ENCODE measurements at regions of chr22 and their contacts with region 1.

Region 1: GRCh38 chr22:40645579-40646197 is 9.2 kb upstream of the MRTFA start:
- DNase-seq: no peak
- H3K4me3 ChIP-seq: no peak overlapping the region
- CTCF ChIP-seq: no peak
- POLR2A ChIP-seq: no peak

Region 2: DNA sequence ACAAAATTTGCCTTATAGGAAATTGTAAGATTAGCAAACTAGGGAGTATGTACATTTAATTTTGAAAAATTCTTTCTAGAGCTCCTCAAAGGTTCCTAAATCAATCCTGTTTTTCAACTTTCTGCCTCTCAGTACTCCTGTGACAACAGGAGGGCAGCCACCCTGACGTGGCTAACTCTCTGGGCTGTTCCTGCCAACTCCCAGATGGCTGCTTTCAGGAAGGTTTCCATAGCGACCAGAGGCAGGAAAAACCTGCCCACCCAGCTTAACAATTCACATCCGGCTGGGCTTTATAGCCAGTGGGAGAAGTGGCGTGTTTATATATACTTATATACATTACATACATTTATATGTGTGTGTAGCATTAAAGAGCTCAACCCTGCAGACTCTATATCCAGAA is 248.8 kb before region 1 on chr22:
- intact Hi-C with region 1: no loop called
- DNase-seq: peak in 1 of 2 donors; percentile 70
- H3K4me3 ChIP-seq: no peak overlapping the region
- CTCF ChIP-seq: no peak
- POLR2A ChIP-seq: no peak

Region 3: DNA sequence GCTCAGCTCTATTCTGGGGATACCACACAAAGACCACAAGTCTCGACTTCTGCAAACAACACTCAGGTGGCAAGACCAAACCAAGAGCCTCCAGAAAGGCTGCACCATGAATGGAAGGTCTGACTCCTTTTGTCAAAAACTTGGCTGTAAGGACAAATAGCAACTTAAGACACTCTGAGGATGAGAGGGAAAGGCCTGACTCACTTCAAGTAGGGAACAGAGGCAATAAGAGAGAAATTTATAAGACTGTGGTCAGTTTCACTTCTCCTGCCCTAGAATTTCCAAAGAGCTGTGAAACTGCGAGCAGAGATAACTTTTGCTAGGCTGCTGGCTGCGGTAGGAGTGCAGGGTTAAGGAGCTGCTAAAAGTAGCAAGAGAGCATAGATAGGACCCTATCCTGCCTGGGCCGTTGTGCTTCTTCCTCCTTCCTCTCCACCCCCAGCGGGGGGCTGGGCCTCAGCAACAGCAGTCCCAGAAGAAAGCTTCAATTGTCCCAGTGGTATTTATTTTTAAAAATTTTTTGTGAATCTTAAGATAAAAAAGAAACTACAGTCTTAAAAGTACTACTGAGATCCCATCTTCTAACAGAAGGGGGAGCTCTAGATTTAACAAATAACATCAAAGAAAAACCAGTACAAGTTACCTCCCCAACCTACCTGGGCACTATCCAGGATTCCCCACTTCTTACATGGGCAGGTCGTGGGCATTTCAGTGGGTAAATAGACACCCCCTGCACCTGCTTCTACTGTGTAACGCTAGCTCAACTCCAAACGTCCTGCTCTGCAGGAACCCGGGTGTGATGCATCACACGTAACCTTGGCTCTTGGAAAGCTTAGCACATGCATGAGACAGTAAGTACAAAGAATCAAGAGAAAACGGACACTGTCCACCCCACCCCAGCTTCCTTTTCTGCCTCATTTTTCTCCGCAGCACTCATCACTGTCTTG is 208.9 kb before region 1 on chr22:
- intact Hi-C with region 1: loop called (anchors 2 kb)
- DNase-seq: no peak
- H3K4me3 ChIP-seq: no peak overlapping the region
- CTCF ChIP-seq: peak in 1 of 3 donors; percentile 20
- POLR2A ChIP-seq: no peak

Region 4: GRCh38 chr22:40764763-40765441 is 119.2 kb after region 1 on chr22:
- intact Hi-C with region 1: no loop called
- DNase-seq: peak in 1 of 2 donors; percentile 42
- H3K4me3 ChIP-seq: no peak overlapping the region
- CTCF ChIP-seq: no peak
- POLR2A ChIP-seq: no peak

Measured in lower leg skin (tissue), 4 donors.